ENCODE measurements at regions of chr20 and their contacts with region 1.

Region 1: GRCh38 chr20:60598528-60598927 is 640.3 kb downstream of the CDH26 start:
- DNase-seq: no peak
- H3K4me3 ChIP-seq: no peak overlapping the region
- H3K27ac ChIP-seq: no peak overlapping the region
- H3K4me1 ChIP-seq: no peaks in the 10 kb centered on the region
- H3K27me3 ChIP-seq: no peaks in the 10 kb centered on the region
- CTCF ChIP-seq: no peak

Region 2: GRCh38 chr20:60642541-60642940 is 44.0 kb after region 1 on chr20:
- CTCF ChIA-PET with region 1: no interaction called
- dilution Hi-C with region 1: loop called (anchors 5 kb)
- in situ Hi-C with region 1: no loop called
- intact Hi-C with region 1: no loop called
- DNase-seq: no peak
- H3K4me3 ChIP-seq: no peak overlapping the region
- H3K27ac ChIP-seq: no peak overlapping the region
- H3K4me1 ChIP-seq: no peaks in the 10 kb centered on the region
- H3K27me3 ChIP-seq: peaks cover 5% of the 10 kb centered on the region
- CTCF ChIP-seq: no peak

Region 3: GRCh38 chr20:60700728-60701127 is 102.2 kb after region 1 on chr20:
- CTCF ChIA-PET with region 1: no interaction called
- dilution Hi-C with region 1: loop called (anchors 10 kb)
- in situ Hi-C with region 1: no loop called
- intact Hi-C with region 1: no loop called
- DNase-seq: no peak
- H3K4me3 ChIP-seq: no peak overlapping the region
- H3K27ac ChIP-seq: no peak overlapping the region
- H3K4me1 ChIP-seq: peaks cover 6% of the 10 kb centered on the region
- H3K27me3 ChIP-seq: no peaks in the 10 kb centered on the region
- CTCF ChIP-seq: no peak

Region 4: DNA sequence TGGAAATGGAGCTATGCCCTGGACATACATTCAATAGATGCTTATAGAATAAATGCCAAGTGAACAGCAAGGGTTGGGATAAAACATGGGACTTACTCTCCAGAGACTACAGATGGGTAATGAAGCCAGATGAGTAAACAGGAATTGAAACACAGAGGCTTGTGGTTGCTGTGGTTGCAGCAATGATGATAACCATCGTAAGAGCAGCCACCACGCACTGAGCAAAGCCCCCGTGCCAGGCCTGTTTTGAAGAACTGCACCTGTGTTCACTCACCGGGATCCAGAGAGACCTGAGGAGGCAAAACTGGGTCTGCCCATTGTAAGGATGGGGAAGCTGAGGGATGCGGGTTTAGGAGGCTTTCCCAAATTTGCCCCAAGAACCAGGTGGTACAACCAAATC is 222.4 kb after region 1 on chr20:
- CTCF ChIA-PET with region 1: no interaction called
- dilution Hi-C with region 1: no loop called
- in situ Hi-C with region 1: no loop called
- intact Hi-C with region 1: no loop called
- DNase-seq: no peak
- H3K4me3 ChIP-seq: no peak overlapping the region
- H3K27ac ChIP-seq: no peak overlapping the region
- H3K4me1 ChIP-seq: no peaks in the 10 kb centered on the region
- H3K27me3 ChIP-seq: peaks cover 2% of the 10 kb centered on the region
- CTCF ChIP-seq: no peak

Measured in mammary epithelial cell (primary cell).